Tibial artery (tissue), 4 donors: ENCODE measurements at regions of chr5 and their contacts with region 1.

Region 1: GRCh38 chr5:115625579-115626444 is at the start of gene TMED7:
- DNase-seq: peak; percentile 100
- H3K4me3 ChIP-seq: peak within 1 kb of the TSS; percentile 91 to 99
- H3K27ac ChIP-seq: peak within 1 kb of the TSS; percentile 95 to 96
- H3K4me1 ChIP-seq: peaks cover 0 to 37% (median 28%) of the 10 kb centered on the region in 4 donors
- H3K27me3 ChIP-seq: no peaks in the 10 kb centered on the region
- CTCF ChIP-seq: peak in 1 of 2 experiments; percentile 29

Region 2: DNA sequence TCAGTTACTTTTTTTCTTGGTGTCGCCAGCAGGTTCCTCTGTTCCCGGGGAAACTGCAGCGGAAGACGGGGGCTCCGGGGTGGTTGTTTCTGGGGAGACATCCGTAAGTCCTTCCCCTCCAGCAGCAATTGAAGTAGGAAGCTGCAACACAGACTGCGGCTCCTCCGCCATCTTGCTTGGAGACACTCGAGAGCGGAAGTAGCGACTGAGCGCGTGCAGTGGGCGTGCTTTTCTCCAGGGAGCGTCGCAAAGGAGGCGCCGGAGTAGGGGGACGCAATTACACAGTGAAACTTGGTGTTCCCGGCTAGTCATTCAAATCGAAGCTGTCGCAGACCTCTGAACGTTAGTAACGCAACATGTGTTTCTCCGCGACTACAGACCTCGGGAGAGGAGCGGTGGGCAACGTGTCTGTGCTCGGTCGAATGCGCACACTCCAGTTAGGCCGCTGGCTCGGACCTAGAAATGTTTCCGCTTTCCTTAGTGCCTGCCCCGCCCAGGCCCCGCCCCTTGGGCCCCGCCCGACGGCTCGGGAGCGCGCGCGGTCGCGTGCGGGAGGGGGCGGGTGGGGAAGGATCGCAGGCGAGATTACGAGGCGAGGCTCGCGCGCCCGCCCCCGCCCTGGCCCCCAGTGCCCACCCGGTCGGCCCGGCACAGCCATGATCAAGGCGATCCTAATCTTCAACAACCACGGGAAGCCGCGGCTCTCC is 215.7 kb after region 1 on chr5 and contains the starts of genes AP3S1 and ATG12:
- intact Hi-C with region 1: loop called (anchors 5 kb)
- DNase-seq: peak; percentile 90 to 94
- H3K4me3 ChIP-seq: peak within 1 kb of the TSS; percentile 80 to 97
- H3K27ac ChIP-seq: peak within 1 kb of the TSS; percentile 93 to 98
- H3K4me1 ChIP-seq: peaks cover 0 to 56% (median 32%) of the 10 kb centered on the region in 4 donors
- H3K27me3 ChIP-seq: no peaks in the 10 kb centered on the region
- CTCF ChIP-seq: no peak

Region 3: DNA sequence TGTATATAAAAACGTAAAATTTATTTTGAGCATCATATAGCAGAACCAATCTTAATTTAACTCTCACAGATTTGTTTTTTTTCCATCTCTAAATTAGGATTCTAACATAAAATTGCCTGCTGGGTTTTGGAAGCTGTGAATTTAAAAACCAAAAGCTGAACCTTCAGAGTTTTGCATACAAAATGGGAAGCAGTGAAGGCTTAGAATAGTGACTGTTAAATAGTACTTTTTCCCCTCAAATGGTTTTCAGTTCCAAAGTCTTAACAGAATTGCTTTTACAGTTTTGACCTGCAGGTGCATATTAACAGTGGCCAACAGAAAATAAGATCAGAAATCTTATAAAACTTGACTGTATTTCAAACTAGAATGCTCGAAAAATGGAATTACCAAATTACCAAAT is 281.4 kb after region 1 on chr5:
- intact Hi-C with region 1: no loop called
- DNase-seq: no peak
- H3K4me3 ChIP-seq: no peak overlapping the region
- H3K27ac ChIP-seq: no peak overlapping the region
- H3K4me1 ChIP-seq: no peaks in the 10 kb centered on the region
- H3K27me3 ChIP-seq: no peaks in the 10 kb centered on the region
- CTCF ChIP-seq: no peak